IMR-90 (cell line): ENCODE measurements at regions of chr1 and their contacts with region 1.

Region 1: DNA sequence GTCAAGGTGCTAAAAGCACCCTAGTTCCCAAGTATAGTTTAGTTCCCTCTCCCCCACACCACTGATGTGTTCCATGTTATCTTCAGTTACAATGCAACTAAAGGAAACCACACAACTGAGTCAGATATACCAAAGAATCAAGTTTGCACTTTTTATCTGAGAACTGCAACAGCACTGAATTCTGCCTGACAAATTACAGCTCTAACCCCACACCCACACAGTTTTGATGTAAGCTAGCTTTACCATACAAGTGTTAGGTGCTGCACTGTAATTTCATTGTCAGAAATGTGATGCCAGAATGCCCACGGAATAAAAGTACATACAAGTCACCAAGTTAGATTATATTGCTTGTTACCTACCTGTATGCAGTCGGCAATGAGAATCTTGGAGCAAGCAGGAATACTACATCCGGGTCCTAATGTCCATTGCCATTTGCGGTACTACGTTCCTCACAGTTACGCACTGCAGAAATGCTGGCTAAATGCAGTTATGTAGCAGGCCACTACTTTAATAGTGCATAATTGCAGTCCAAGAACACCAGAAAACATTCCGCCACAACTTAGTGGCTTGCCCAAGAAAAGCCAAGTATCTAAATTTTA is 12.1 kb downstream of the SFPQ start:
- DNase-seq: peak; percentile 44
- ATAC-seq: peak; percentile 15
- H3K4me3 ChIP-seq: no peak overlapping the region
- H3K27ac ChIP-seq: no peak overlapping the region
- H3K4me1 ChIP-seq: no peaks in the 10 kb centered on the region
- H3K27me3 ChIP-seq: no peaks in the 10 kb centered on the region
- CTCF ChIP-seq: no peak
- POLR2A ChIP-seq: no peak
- RAD21 ChIP-seq: no peak

Region 2: GRCh38 chr1:34852677-34853217 is 328.1 kb before region 1 on chr1:
- CTCF ChIA-PET with region 1: no interaction called
- POLR2A ChIA-PET with region 1: no interaction called
- dilution Hi-C with region 1: no loop called
- in situ Hi-C with region 1: no loop called
- intact Hi-C with region 1: loop called (anchors 10 kb)
- DNase-seq: peak; percentile 95
- ATAC-seq: peak; percentile 100
- H3K4me3 ChIP-seq: no peak overlapping the region
- H3K27ac ChIP-seq: no peak overlapping the region
- H3K4me1 ChIP-seq: no peaks in the 10 kb centered on the region
- H3K27me3 ChIP-seq: no peaks in the 10 kb centered on the region
- CTCF ChIP-seq: peak; percentile 99
- POLR2A ChIP-seq: no peak
- RAD21 ChIP-seq: peak; percentile 72

Region 3: DNA sequence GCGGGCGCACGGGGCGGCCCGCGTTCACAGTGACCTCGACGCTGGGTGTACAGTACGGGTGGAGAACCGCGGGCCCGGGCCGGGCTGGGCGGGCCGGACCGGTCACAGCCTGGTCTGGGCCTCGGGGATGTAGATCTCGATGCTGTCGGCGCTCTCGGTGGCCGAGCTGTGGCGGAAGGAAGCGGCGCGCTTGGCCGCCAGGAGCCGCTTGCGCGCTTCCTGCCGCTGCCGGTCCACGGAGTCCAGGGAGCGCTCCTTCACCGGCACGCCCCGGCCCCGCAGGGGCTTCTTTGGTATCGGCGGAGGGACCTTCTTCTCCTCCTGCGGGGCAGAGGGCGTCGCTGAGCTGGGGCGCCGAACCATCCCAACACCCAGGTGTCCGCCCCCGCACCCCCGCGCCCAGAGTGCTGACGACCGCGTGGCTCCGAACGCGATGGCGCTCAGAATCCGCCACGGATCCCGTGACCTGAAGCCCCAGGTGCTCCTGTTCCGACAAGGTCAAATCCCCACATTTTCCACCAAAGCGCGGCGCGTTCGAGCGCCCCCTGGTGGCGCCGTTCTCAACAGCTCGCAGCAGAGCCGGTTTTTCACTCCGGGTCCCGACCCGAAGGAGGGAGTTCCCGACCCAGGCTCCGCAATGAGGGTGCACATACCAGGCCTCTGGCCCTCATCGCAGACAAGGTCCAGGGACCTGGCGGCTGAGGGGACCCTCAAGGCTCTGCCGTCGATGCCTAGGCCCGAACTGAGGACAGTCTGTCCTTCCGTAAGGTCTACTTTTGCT is 314.7 kb before region 1 on chr1:
- CTCF ChIA-PET with region 1: no interaction called
- POLR2A ChIA-PET with region 1: no interaction called
- dilution Hi-C with region 1: no loop called
- in situ Hi-C with region 1: no loop called
- intact Hi-C with region 1: no loop called
- DNase-seq: peak; percentile 53
- ATAC-seq: peak; percentile 90
- H3K4me3 ChIP-seq: peak overlapping the region; percentile 57
- H3K27ac ChIP-seq: peak overlapping the region; percentile 8; the same call in 1 of the 2 replicates
- H3K4me1 ChIP-seq: no peaks in the 10 kb centered on the region
- H3K27me3 ChIP-seq: peaks cover 29% of the 10 kb centered on the region
- CTCF ChIP-seq: peak; percentile 82
- POLR2A ChIP-seq: no peak
- RAD21 ChIP-seq: peak; percentile 40

Region 4: DNA sequence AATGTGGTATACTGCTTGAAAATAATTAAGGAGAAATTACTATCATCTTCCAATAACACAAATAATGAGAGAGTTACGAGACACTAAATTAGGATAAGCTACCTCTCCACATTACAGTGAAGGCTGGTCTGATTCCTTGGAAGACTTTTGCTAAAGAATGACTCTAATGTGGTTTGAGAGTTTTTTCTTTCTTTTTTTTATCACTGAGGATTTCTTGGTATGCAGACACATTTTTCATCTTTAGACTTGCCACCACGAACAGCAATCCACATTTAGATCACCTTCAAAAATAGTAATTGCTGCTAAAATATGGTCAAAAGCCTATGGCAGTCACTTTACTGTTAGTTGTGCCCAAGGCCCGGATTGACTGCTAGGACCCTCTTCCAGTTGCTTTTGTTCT is 179.1 kb before region 1 on chr1:
- CTCF ChIA-PET with region 1: no interaction called
- POLR2A ChIA-PET with region 1: no interaction called
- dilution Hi-C with region 1: no loop called
- in situ Hi-C with region 1: no loop called
- intact Hi-C with region 1: loop called (anchors 10 kb)
- DNase-seq: peak; percentile 20
- ATAC-seq: peak; percentile 76
- H3K4me3 ChIP-seq: no peak overlapping the region
- H3K27ac ChIP-seq: no peak overlapping the region
- H3K4me1 ChIP-seq: no peaks in the 10 kb centered on the region
- H3K27me3 ChIP-seq: no peaks in the 10 kb centered on the region
- CTCF ChIP-seq: no peak
- POLR2A ChIP-seq: no peak
- RAD21 ChIP-seq: no peak

Region 5: DNA sequence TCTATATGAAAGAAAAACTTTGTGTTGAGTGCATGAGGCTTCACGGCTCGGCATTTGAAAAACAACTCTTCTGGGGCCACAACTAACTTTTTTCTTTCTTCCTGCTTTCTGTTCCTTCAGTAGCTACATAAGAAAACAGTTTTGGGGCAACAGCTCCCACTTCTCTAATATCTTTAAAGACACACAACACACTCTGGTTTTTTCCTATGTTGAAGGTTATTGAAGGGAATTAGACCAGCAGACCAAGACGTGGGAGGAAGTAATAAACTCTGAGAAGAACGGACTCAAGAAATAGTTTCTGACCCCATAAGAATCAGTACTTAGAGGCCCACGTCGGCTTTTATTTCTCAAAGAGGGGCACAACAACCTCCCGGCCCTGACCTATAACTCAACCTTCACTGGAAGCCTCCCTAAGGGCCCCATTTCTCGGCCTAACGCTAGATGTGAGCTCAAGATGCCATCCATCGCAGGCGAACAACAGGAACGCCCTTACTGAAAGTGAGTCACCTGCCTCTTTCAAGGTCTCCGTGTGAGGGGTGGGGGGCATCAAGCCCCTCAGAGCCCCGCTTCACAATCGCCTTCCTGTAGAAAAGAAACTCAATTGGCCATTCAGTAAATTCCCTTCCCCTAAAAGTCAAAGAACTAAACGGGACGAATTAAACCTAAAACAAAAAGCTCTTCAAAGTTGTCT is 150.0 kb before region 1 on chr1:
- CTCF ChIA-PET with region 1: no interaction called
- POLR2A ChIA-PET with region 1: no interaction called
- dilution Hi-C with region 1: no loop called
- in situ Hi-C with region 1: no loop called
- intact Hi-C with region 1: loop called (anchors 5 kb)
- DNase-seq: peak; percentile 49
- ATAC-seq: peak; percentile 24; the same call in 1 of the 2 replicates
- H3K4me3 ChIP-seq: peak overlapping the region; percentile 58
- H3K27ac ChIP-seq: peak overlapping the region; percentile 80
- H3K4me1 ChIP-seq: peaks cover 4% of the 10 kb centered on the region
- H3K27me3 ChIP-seq: no peaks in the 10 kb centered on the region
- CTCF ChIP-seq: no peak
- POLR2A ChIP-seq: no peak
- RAD21 ChIP-seq: no peak